Activated B cell treated with CpG ODN at 0.5 μM for 24 hours (primary cell): ENCODE measurements at regions of chr1 and their contacts with region 1.

Region 1: GRCh38 chr1:206663832-206664652 is 20.7 kb upstream of the MAPKAPK2 start:
- DNase-seq: peak; percentile 49
- ATAC-seq: peak; percentile 89
- H3K4me3 Mint-ChIP-seq: peak overlapping the region; percentile 47
- H3K27ac Mint-ChIP-seq: no peak overlapping the region
- H3K4me1 Mint-ChIP-seq: peaks cover 16% of the 10 kb centered on the region
- H3K27me3 Mint-ChIP-seq: peaks cover 17% of the 10 kb centered on the region
- CTCF ChIP-seq: peak; percentile 62

Region 2: GRCh38 chr1:206479183-206480125 is 184.6 kb before region 1 on chr1:
- CTCF ChIA-PET with region 1: interaction called, 25 read pairs
- POLR2A ChIA-PET with region 1: interaction called, 4 read pairs
- intact Hi-C with region 1: loop called (anchors 1 kb)
- DNase-seq: no peak
- ATAC-seq: peak; percentile 74
- H3K4me3 Mint-ChIP-seq: no peak overlapping the region
- H3K27ac Mint-ChIP-seq: no peak overlapping the region
- H3K4me1 Mint-ChIP-seq: peaks cover 16% of the 10 kb centered on the region
- H3K27me3 Mint-ChIP-seq: no peaks in the 10 kb centered on the region
- CTCF ChIP-seq: peak; percentile 27

Region 3: GRCh38 chr1:206612129-206612876 is 51.7 kb before region 1 on chr1 and contains the start of gene EIF2D:
- CTCF ChIA-PET with region 1: interaction called, 23 read pairs
- POLR2A ChIA-PET with region 1: interaction called, 4 read pairs
- intact Hi-C with region 1: loop called (anchors 1 kb)
- DNase-seq: peak; percentile 95
- ATAC-seq: peak; percentile 98
- H3K4me3 Mint-ChIP-seq: peak within 1 kb of the TSS; percentile 96
- H3K27ac Mint-ChIP-seq: peak within 1 kb of the TSS; percentile 97
- H3K4me1 Mint-ChIP-seq: peaks cover 30% of the 10 kb centered on the region
- H3K27me3 Mint-ChIP-seq: no peaks in the 10 kb centered on the region
- CTCF ChIP-seq: peak; percentile 72
- total RNA-seq, gene EIF2D: 61.2 and 65.4 TPM in 2 replicates

Region 4: GRCh38 chr1:206674745-206675175 is 10.7 kb after region 1 on chr1:
- CTCF ChIA-PET with region 1: interaction called, 40 read pairs
- POLR2A ChIA-PET with region 1: interaction called, 3 read pairs
- intact Hi-C with region 1: loop called (anchors 1 kb)
- DNase-seq: no peak
- ATAC-seq: no peak
- H3K4me3 Mint-ChIP-seq: no peak overlapping the region
- H3K27ac Mint-ChIP-seq: peak overlapping the region; percentile 73
- H3K4me1 Mint-ChIP-seq: peaks cover 24% of the 10 kb centered on the region
- H3K27me3 Mint-ChIP-seq: peaks cover 5% of the 10 kb centered on the region
- CTCF ChIP-seq: no peak

Region 5: GRCh38 chr1:206725109-206725963 is 61.3 kb after region 1 on chr1:
- CTCF ChIA-PET with region 1: interaction called, 40 read pairs
- POLR2A ChIA-PET with region 1: interaction called, 3 read pairs
- intact Hi-C with region 1: loop called (anchors 1 kb)
- DNase-seq: no peak
- ATAC-seq: peak; percentile 63
- H3K4me3 Mint-ChIP-seq: no peak overlapping the region
- H3K27ac Mint-ChIP-seq: peak overlapping the region; percentile 63
- H3K4me1 Mint-ChIP-seq: peaks cover 48% of the 10 kb centered on the region
- H3K27me3 Mint-ChIP-seq: no peaks in the 10 kb centered on the region
- CTCF ChIP-seq: no peak